Activated CD4-positive, alpha-beta memory T cell treated with anti-CD3 and anti-CD28 coated beads, Interleukin-2, amount 10 ng/mL, durations not matched to agents 7 days and 5 days (primary cell): ENCODE measurements at regions of chr1 and their contacts with region 1.

Region 1: GRCh38 chr1:212155219-212155618 is 119.7 kb downstream of the DTL start:
- DNase-seq: no peak
- H3K4me3 Mint-ChIP-seq: no peak overlapping the region
- H3K27ac Mint-ChIP-seq: no peak overlapping the region
- H3K4me1 Mint-ChIP-seq: peaks cover 10% of the 10 kb centered on the region
- H3K27me3 Mint-ChIP-seq: no peaks in the 10 kb centered on the region

Region 2: GRCh38 chr1:212045981-212046380 is 109.2 kb before region 1 on chr1:
- CTCF ChIA-PET with region 1: no interaction called
- POLR2A ChIA-PET with region 1: no interaction called
- DNase-seq: no peak
- H3K4me3 Mint-ChIP-seq: no peak overlapping the region
- H3K27ac Mint-ChIP-seq: no peak overlapping the region
- H3K4me1 Mint-ChIP-seq: peaks cover 23% of the 10 kb centered on the region
- H3K27me3 Mint-ChIP-seq: no peaks in the 10 kb centered on the region

Region 3: GRCh38 chr1:212201461-212201860 is 46.2 kb after region 1 on chr1:
- CTCF ChIA-PET with region 1: interaction called, 10 read pairs
- POLR2A ChIA-PET with region 1: no interaction called
- DNase-seq: no peak
- H3K4me3 Mint-ChIP-seq: no peak overlapping the region
- H3K27ac Mint-ChIP-seq: no peak overlapping the region
- H3K4me1 Mint-ChIP-seq: peaks cover 3% of the 10 kb centered on the region
- H3K27me3 Mint-ChIP-seq: peaks cover 8% of the 10 kb centered on the region

Region 4: DNA sequence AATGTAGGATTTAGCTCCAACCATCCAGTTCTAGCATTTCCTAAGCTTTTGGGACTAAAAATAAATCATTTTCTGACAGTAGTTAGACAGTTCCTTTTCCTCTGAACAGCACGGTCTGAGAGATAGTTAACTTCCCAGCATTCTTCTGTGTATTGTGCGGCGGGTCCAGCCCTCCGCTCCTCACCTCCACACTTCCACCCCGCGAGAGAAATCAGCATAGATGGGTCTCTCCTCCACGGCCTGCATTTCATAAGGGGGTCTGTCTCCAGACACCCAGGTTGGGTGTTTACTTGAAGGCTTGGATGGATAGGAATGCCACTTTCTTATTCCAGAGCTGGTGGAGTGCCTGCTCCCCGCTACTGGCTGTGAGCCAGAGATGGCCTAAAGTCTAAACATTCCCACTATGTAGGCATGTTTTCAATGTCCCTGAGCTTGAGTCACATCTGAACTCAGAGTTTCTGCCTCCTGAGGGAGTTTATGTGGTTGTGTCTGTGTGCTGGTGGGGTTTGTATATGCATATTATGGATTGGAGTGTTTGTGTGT is 92.0 kb after region 1 on chr1:
- CTCF ChIA-PET with region 1: no interaction called
- POLR2A ChIA-PET with region 1: no interaction called
- DNase-seq: no peak
- H3K4me3 Mint-ChIP-seq: no peak overlapping the region
- H3K27ac Mint-ChIP-seq: no peak overlapping the region
- H3K4me1 Mint-ChIP-seq: peaks cover 23% of the 10 kb centered on the region
- H3K27me3 Mint-ChIP-seq: peaks cover 3% of the 10 kb centered on the region